ENCODE measurements at regions of chr6 and their contacts with region 1.

Region 1: DNA sequence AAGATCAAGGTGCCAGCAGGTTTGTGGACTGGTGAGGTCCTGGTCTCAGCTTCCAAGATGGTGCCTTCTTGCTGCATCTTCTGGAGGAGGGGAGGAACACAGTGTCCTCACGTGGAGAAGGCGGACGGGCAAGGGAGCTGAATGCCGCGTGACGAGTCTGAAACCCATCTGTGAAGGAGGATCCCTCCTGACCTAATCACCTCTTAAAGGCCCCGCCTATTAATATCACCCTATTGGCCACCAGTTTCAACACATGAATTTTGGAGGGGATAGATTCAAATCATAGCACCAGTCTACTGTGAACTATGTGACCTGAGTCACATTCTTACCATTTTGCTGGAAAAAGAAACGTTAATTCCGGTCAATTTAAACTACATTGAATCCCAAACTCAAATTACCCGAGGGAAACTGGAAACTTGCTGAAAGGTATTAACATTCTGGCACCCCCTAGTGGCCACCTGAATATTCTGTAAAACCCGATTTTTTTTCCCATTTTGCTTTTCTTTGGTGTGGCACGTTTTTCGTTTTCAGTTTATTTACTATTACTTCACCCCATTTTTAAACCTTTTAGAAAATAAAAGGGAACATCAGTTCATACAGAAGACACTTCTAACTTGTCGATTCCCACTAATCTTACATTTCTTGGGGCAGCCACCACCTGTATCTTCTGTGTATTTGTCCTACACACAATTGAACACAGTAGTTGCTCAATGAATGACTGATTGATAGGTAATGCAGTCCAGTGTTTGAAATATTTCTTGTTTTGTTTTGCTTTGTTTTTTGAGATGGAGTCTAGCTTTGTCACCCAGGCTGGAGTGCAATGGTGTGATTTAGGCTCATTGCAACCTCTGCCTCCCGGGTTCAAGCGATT is 17.9 kb upstream of the CCDC170 start:
- DNase-seq: peak; percentile 68
- ATAC-seq: peak; percentile 43
- H3K4me3 ChIP-seq: peak overlapping the region in 2 of 5 experiments; percentile 11 to 23
- H3K4me3 Mint-ChIP-seq: peak overlapping the region; percentile 55
- H3K27ac ChIP-seq: no peak overlapping the region
- H3K27ac Mint-ChIP-seq: no peak overlapping the region
- H3K4me1 ChIP-seq: peaks cover 0 to 6% of the 10 kb centered on the region in 2 donors
- H3K4me1 Mint-ChIP-seq: peaks cover 11% of the 10 kb centered on the region
- H3K27me3 ChIP-seq: no peaks in the 10 kb centered on the region
- H3K27me3 Mint-ChIP-seq: no peaks in the 10 kb centered on the region
- CTCF ChIP-seq: peak; percentile 92

Region 2: GRCh38 chr6:150775415-150776203 is 700.3 kb before region 1 on chr6:
- CTCF ChIA-PET with region 1: no interaction called
- POLR2A ChIA-PET with region 1: no interaction called
- intact Hi-C with region 1: no loop called
- DNase-seq: no peak
- ATAC-seq: no peak
- H3K4me3 ChIP-seq: no peak overlapping the region
- H3K4me3 Mint-ChIP-seq: no peak overlapping the region
- H3K27ac ChIP-seq: no peak overlapping the region
- H3K27ac Mint-ChIP-seq: peak overlapping the region; percentile 50
- H3K4me1 ChIP-seq: no peaks in the 10 kb centered on the region
- H3K4me1 Mint-ChIP-seq: peaks cover 17% of the 10 kb centered on the region
- H3K27me3 ChIP-seq: no peaks in the 10 kb centered on the region
- H3K27me3 Mint-ChIP-seq: no peaks in the 10 kb centered on the region
- CTCF ChIP-seq: no peak

Region 3: GRCh38 chr6:151409260-151409659 is 66.6 kb before region 1 on chr6:
- CTCF ChIA-PET with region 1: interaction called, 5 read pairs
- POLR2A ChIA-PET with region 1: no interaction called
- intact Hi-C with region 1: loop called (anchors 1 kb)
- DNase-seq: no peak
- ATAC-seq: no peak
- H3K4me3 ChIP-seq: no peak overlapping the region
- H3K4me3 Mint-ChIP-seq: no peak overlapping the region
- H3K27ac ChIP-seq: peak overlapping the region in 1 of 2 donors; percentile 47
- H3K27ac Mint-ChIP-seq: peak overlapping the region; percentile 47
- H3K4me1 ChIP-seq: peaks cover 6 to 14% of the 10 kb centered on the region in 2 donors
- H3K4me1 Mint-ChIP-seq: peaks cover 19% of the 10 kb centered on the region
- H3K27me3 ChIP-seq: no peaks in the 10 kb centered on the region
- H3K27me3 Mint-ChIP-seq: no peaks in the 10 kb centered on the region
- CTCF ChIP-seq: no peak

Region 4: DNA sequence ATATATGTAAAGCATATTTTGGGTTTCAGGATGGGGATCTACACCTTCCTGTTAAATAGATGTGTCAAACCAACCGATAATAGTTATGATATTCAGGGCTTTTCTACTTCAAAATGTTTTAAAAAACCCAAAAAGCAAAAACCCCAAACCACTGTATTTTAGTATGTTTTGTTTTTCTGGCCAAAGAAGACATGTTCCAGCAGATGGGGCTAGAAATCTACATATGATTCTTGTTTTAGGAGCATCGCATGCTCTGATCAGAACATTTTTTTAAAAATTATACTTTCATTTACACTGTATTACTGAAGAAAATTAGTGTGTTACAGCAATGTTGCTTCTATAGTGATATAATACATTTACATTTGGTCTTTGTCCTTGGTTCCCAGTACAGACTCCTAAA is 35.0 kb before region 1 on chr6:
- CTCF ChIA-PET with region 1: interaction called, 11 read pairs
- POLR2A ChIA-PET with region 1: no interaction called
- intact Hi-C with region 1: loop called (anchors 5 kb)
- DNase-seq: peak; percentile 41
- ATAC-seq: no peak
- H3K4me3 ChIP-seq: no peak overlapping the region
- H3K4me3 Mint-ChIP-seq: no peak overlapping the region
- H3K27ac ChIP-seq: peak overlapping the region in 1 of 2 donors; percentile 27
- H3K27ac Mint-ChIP-seq: no peak overlapping the region
- H3K4me1 ChIP-seq: peaks cover 6 to 8% of the 10 kb centered on the region in 2 donors
- H3K4me1 Mint-ChIP-seq: peaks cover 15% of the 10 kb centered on the region
- H3K27me3 ChIP-seq: no peaks in the 10 kb centered on the region
- H3K27me3 Mint-ChIP-seq: no peaks in the 10 kb centered on the region
- CTCF ChIP-seq: peak; percentile 56

Region 5: DNA sequence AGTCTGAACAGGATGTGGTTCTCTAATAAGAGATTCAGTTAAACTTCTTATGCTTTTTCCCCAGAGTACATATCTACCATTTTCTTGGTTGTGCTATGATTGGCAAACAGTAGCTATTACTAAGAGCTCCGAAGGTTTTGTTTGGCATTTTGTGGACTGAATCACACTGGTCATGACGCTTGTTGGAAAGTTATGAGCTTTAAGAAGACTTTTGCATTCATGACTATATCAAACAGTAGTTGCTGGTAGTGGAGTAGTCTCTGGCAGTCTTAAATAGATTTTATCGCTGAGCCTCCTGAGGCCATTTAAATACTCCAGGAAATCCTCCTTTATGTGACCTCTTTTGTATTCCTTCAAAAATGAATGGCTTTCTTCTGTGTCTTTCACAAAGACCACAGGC is 58.7 kb after region 1 on chr6:
- CTCF ChIA-PET with region 1: no interaction called
- POLR2A ChIA-PET with region 1: no interaction called
- intact Hi-C with region 1: no loop called
- DNase-seq: no peak
- ATAC-seq: no peak
- H3K4me3 ChIP-seq: no peak overlapping the region
- H3K4me3 Mint-ChIP-seq: no peak overlapping the region
- H3K27ac ChIP-seq: no peak overlapping the region
- H3K27ac Mint-ChIP-seq: no peak overlapping the region
- H3K4me1 ChIP-seq: no peaks in the 10 kb centered on the region
- H3K4me1 Mint-ChIP-seq: no peaks in the 10 kb centered on the region
- H3K27me3 ChIP-seq: no peaks in the 10 kb centered on the region
- H3K27me3 Mint-ChIP-seq: peaks cover 14% of the 10 kb centered on the region
- CTCF ChIP-seq: no peak